Heart right ventricle (tissue), 16 donors: ENCODE measurements at regions of chr11 and their contacts with region 1.

Region 1: GRCh38 chr11:100632941-100633452 is 54.1 kb upstream of the ARHGAP42 start:
- DNase-seq: peak; percentile 43 to 80
- ATAC-seq: peak; percentile 79 to 96 (median 91)
- H3K4me3 ChIP-seq: no peak overlapping the region
- H3K27ac ChIP-seq: peak overlapping the region; percentile 8 to 82 (median 62)
- H3K4me1 ChIP-seq: peaks cover 0 to 38% (median 13%) of the 10 kb centered on the region in 9 donors
- H3K27me3 ChIP-seq: no peaks in the 10 kb centered on the region
- CTCF ChIP-seq: no peak

Region 2: GRCh38 chr11:100849009-100849900 is 216.3 kb after region 1 on chr11:
- intact Hi-C with region 1: loop called in 1 of 10 experiments (anchors 5 kb)
- DNase-seq: no peak
- ATAC-seq: peak in 7 of 8 donors; percentile 60 to 75 (median 70)
- H3K4me3 ChIP-seq: no peak overlapping the region
- H3K27ac ChIP-seq: peak overlapping the region in 8 of 10 donors; percentile 22 to 72 (median 48)
- H3K4me1 ChIP-seq: peaks cover 0 to 36% (median 18%) of the 10 kb centered on the region in 9 donors
- H3K27me3 ChIP-seq: no peaks in the 10 kb centered on the region
- CTCF ChIP-seq: no peak